Right cardiac atrium (tissue), 5 donors: ENCODE measurements at regions of chr9 and their contacts with region 1.

Region 1: GRCh38 chr9:83219152-83219923 is 156.4 kb upstream of the RASEF start:
- DNase-seq: peak; percentile 78 to 92 (median 90)
- ATAC-seq: peak; percentile 96 to 98
- H3K4me3 ChIP-seq: peak overlapping the region; percentile 69
- H3K27ac ChIP-seq: peak overlapping the region; percentile 15
- H3K4me1 ChIP-seq: no peaks in the 10 kb centered on the region
- H3K27me3 ChIP-seq: no peaks in the 10 kb centered on the region

Region 2: GRCh38 chr9:83071626-83072025 is 147.7 kb before region 1 on chr9:
- intact Hi-C with region 1: no loop called
- DNase-seq: no peak
- ATAC-seq: no peak
- H3K4me3 ChIP-seq: no peak overlapping the region
- H3K27ac ChIP-seq: no peak overlapping the region
- H3K4me1 ChIP-seq: no peaks in the 10 kb centered on the region
- H3K27me3 ChIP-seq: no peaks in the 10 kb centered on the region

Region 3: GRCh38 chr9:83144492-83144891 is 74.8 kb before region 1 on chr9:
- intact Hi-C with region 1: no loop called
- DNase-seq: no peak
- ATAC-seq: no peak
- H3K4me3 ChIP-seq: no peak overlapping the region
- H3K27ac ChIP-seq: no peak overlapping the region
- H3K4me1 ChIP-seq: no peaks in the 10 kb centered on the region
- H3K27me3 ChIP-seq: no peaks in the 10 kb centered on the region

Region 4: DNA sequence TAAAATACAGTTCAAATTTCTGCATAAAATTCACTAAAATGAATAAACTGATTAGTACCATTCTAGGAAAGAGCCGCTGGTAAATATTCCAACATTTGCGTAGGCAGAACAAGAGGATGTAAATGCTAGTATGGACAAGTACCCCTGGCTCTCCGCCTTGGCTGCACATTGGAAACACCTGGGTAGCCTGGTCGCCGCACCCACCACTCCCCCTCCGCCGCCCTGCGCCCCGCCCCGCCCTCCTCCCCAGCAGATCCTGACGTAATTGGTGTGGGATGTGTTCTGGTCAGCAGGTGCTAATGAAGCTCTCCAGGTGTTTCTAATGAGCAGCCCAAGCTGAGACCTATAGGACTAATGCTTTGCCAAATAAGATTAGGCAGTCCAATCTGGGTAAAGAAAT is 93.2 kb after region 1 on chr9:
- intact Hi-C with region 1: loop called in 1 of 4 experiments (anchors 10 kb)
- DNase-seq: no peak
- ATAC-seq: no peak
- H3K4me3 ChIP-seq: no peak overlapping the region
- H3K27ac ChIP-seq: no peak overlapping the region
- H3K4me1 ChIP-seq: no peaks in the 10 kb centered on the region
- H3K27me3 ChIP-seq: no peaks in the 10 kb centered on the region

Region 5: DNA sequence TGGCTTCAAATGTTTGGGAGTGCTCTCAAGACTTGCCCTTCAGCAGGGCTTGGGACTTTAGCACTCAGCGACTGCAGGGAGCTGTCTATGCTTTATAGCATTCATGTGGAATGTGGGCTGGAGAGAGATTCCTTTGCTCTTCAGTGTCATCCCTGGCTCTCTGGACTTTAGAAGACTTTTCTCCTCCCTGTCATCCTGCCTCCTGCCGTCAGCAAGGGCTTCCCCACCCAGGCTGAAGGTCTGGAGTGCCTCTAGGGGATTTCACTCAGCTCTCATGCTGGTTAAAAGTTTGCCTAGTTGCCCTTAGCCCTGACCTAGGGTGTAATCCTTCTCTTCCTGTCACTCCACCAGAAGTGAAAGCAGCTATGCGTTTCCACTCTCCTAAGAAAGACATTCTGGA is 108.0 kb after region 1 on chr9:
- intact Hi-C with region 1: loop called in 2 of 4 experiments (anchors 5 to 10 kb)
- DNase-seq: no peak
- ATAC-seq: peak; percentile 48 to 69
- H3K4me3 ChIP-seq: no peak overlapping the region
- H3K27ac ChIP-seq: peak overlapping the region; percentile 52
- H3K4me1 ChIP-seq: peaks cover 8% of the 10 kb centered on the region
- H3K27me3 ChIP-seq: no peaks in the 10 kb centered on the region

Region 6: GRCh38 chr9:83334320-83334719 is 115.0 kb after region 1 on chr9:
- intact Hi-C with region 1: loop called in 3 of 4 experiments (anchors 5 to 10 kb)
- DNase-seq: peak; percentile 78 to 90 (median 90)
- ATAC-seq: peak; percentile 92 to 95
- H3K4me3 ChIP-seq: no peak overlapping the region
- H3K27ac ChIP-seq: no peak overlapping the region
- H3K4me1 ChIP-seq: no peaks in the 10 kb centered on the region
- H3K27me3 ChIP-seq: no peaks in the 10 kb centered on the region

Region 7: GRCh38 chr9:83538172-83538889 is 319.0 kb after region 1 on chr9 and contains the start of gene FRMD3:
- intact Hi-C with region 1: loop called in 3 of 4 experiments (anchors 5 to 10 kb)
- DNase-seq: peak; percentile 87 to 95 (median 93)
- ATAC-seq: peak; percentile 97 to 98
- H3K4me3 ChIP-seq: peak within 1 kb of the TSS; percentile 30
- H3K27ac ChIP-seq: peak within 1 kb of the TSS; percentile 40
- H3K4me1 ChIP-seq: peaks cover 4% of the 10 kb centered on the region
- H3K27me3 ChIP-seq: no peaks in the 10 kb centered on the region
- total RNA-seq, gene FRMD3: 34.3 to 75.1 (median 60.6) TPM

Region 8: GRCh38 chr9:83544002-83544698 is 324.8 kb after region 1 on chr9:
- intact Hi-C with region 1: loop called in 3 of 4 experiments (anchors 5 to 10 kb)
- DNase-seq: peak in 2 of 3 donors; percentile 42 to 58
- ATAC-seq: peak; percentile 87 to 96
- H3K4me3 ChIP-seq: no peak overlapping the region
- H3K27ac ChIP-seq: no peak overlapping the region
- H3K4me1 ChIP-seq: peaks cover 2% of the 10 kb centered on the region
- H3K27me3 ChIP-seq: no peaks in the 10 kb centered on the region

Region 9: DNA sequence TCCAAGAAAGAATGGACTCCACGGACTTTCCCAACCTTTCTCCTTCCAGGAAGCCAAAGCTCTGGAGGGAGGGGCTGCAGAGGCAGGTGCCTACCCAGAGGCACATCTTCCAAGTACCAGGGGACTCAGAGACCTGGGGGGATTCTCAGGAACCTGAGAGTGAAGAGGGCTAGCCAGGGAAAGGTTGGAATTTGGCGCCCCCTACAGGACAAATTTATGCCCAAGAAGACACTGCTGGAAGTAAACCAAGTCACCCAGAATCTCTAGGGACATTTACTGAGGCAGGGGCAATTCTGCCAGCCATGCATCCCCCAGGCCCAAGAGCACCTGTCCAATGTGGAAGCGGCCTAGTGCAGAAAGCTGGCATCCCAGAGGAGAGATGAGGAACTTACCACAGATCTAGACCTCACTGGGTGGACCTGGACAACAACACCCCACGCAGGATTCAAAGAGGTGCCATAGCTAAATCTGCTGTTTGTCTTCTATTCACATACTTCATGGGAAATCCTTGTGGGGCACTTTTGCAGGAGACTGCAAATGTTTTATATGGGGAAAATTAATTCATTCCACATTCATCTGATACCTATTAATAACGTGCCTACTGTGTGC is 377.7 kb after region 1 on chr9:
- intact Hi-C with region 1: loop called in 1 of 4 experiments (anchors 10 kb)
- DNase-seq: no peak
- ATAC-seq: peak; percentile 36 to 39
- H3K4me3 ChIP-seq: no peak overlapping the region
- H3K27ac ChIP-seq: no peak overlapping the region
- H3K4me1 ChIP-seq: no peaks in the 10 kb centered on the region
- H3K27me3 ChIP-seq: no peaks in the 10 kb centered on the region